ENCODE measurements at regions of chr3 and their contacts with region 1.

Region 1: GRCh38 chr3:141192345-141192744 is 39.3 kb upstream of the PXYLP1 start:
- DNase-seq: peak; percentile 58 to 90
- ATAC-seq: peak; percentile 99 to 100
- H3K4me3 ChIP-seq: no peak overlapping the region
- H3K27ac ChIP-seq: no peak overlapping the region
- H3K4me1 ChIP-seq: no peaks in the 10 kb centered on the region
- CTCF ChIP-seq: peak; percentile 82
- EP300 ChIP-seq: no peak
- POLR2A ChIP-seq: no peak
- RAD21 ChIP-seq: peak; percentile 87 to 88

Region 2: GRCh38 chr3:140898340-140899180 is 293.8 kb before region 1 on chr3:
- CTCF ChIA-PET with region 1: interaction called, 14 read pairs
- POLR2A ChIA-PET with region 1: no interaction called
- DNase-seq: peak in 1 of 2 experiments; percentile 54
- ATAC-seq: peak; percentile 81 to 85; a peak in 5 of 6 replicates
- H3K4me3 ChIP-seq: no peak overlapping the region
- H3K27ac ChIP-seq: no peak overlapping the region
- H3K4me1 ChIP-seq: no peaks in the 10 kb centered on the region
- CTCF ChIP-seq: peak; percentile 51
- EP300 ChIP-seq: no peak
- POLR2A ChIP-seq: no peak
- RAD21 ChIP-seq: peak; percentile 51 to 57

Region 3: DNA sequence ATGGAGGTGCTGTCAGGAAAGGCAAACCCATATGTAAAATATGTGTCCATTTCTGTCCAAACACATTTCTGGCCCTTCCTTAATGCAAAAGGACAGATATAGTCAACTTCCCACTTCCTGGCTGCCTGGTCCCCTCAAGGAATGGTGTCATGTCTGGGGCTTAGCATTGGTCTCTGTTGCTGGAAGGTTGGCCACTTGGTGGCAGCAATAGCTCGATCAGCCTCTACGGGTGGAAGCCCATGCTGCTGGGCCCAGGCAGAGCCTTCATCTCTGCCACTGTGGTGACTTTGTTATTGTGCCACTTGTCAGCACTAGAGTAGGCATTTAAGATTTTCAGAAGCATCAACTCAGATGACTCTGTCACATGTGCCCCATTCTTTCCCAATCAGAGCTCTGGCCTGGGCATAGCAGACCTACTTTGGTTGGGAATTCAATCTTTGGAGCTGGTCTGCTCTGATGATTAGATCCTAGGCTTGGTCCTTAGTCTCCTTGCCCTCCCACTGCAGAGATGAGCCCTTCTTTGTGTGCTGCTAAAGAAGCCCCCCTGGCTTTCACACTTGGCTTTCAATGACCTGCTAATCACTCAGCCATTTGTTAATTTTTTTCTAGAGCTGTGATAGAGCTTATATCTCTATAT is 192.2 kb before region 1 on chr3:
- CTCF ChIA-PET with region 1: interaction called, 27 read pairs
- POLR2A ChIA-PET with region 1: no interaction called
- DNase-seq: peak; percentile 17 to 47
- ATAC-seq: peak; percentile 94 to 99
- H3K4me3 ChIP-seq: no peak overlapping the region
- H3K27ac ChIP-seq: no peak overlapping the region
- H3K4me1 ChIP-seq: no peaks in the 10 kb centered on the region
- CTCF ChIP-seq: peak; percentile 57
- EP300 ChIP-seq: no peak
- POLR2A ChIP-seq: no peak
- RAD21 ChIP-seq: peak; percentile 60 to 75

Region 4: GRCh38 chr3:141011232-141011996 is 180.9 kb before region 1 on chr3:
- CTCF ChIA-PET with region 1: interaction called, 10 read pairs
- POLR2A ChIA-PET with region 1: no interaction called
- DNase-seq: peak; percentile 18 to 56
- ATAC-seq: peak; percentile 83 to 98
- H3K4me3 ChIP-seq: no peak overlapping the region
- H3K27ac ChIP-seq: no peak overlapping the region
- H3K4me1 ChIP-seq: no peaks in the 10 kb centered on the region
- CTCF ChIP-seq: peak; percentile 53
- EP300 ChIP-seq: no peak
- POLR2A ChIP-seq: no peak
- RAD21 ChIP-seq: peak; percentile 41 to 63; a peak in 4 of 5 replicates

Region 5: GRCh38 chr3:141129541-141130011 is 62.8 kb before region 1 on chr3:
- CTCF ChIA-PET with region 1: no interaction called
- POLR2A ChIA-PET with region 1: no interaction called
- DNase-seq: no peak
- ATAC-seq: no peak
- H3K4me3 ChIP-seq: no peak overlapping the region
- H3K27ac ChIP-seq: no peak overlapping the region
- H3K4me1 ChIP-seq: no peaks in the 10 kb centered on the region
- CTCF ChIP-seq: no peak
- EP300 ChIP-seq: no peak
- POLR2A ChIP-seq: no peak
- RAD21 ChIP-seq: no peak

Region 6: DNA sequence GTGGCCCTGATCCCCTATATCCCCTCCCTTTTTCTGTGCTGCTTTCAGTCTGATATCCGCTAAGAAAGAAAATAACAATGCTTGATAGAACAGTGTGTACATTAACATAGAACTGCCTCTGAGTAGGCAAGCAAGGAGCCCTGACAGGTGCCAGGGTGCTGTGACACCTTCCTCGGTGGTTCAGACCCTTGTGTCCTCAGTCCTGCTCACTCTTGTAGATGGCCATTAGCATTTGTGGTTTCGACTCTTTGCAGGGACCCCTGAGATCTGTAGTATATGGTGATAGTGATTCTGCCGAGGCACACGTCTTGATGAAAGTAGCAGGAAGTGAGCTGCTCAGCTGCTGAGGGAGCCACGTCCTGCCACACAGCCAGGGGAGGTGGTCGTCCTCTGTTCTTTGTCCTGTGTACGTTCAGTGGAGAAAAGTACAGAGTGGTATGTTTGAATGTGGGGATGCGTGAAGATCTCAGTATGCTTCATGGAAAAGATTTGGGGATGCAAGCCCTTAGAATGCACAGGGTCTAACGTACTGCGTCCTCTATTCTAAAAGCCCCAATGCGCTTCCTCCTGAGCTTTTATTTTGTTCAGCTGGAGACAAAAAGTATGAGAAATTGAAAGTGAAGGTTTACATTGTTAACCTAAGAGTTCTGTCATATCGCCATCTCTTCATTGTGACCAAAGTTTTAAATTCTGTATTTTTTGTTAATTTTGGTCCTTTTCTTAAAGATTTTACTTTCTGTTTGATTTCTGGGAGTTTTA is 74.6 kb after region 1 on chr3:
- CTCF ChIA-PET with region 1: no interaction called
- POLR2A ChIA-PET with region 1: no interaction called
- DNase-seq: no peak
- ATAC-seq: no peak
- H3K4me3 ChIP-seq: no peak overlapping the region
- H3K27ac ChIP-seq: no peak overlapping the region
- H3K4me1 ChIP-seq: no peaks in the 10 kb centered on the region
- CTCF ChIP-seq: no peak
- EP300 ChIP-seq: no peak
- POLR2A ChIP-seq: no peak
- RAD21 ChIP-seq: no peak

Region 7: GRCh38 chr3:141379250-141379966 is 187.1 kb after region 1 on chr3:
- CTCF ChIA-PET with region 1: no interaction called
- POLR2A ChIA-PET with region 1: no interaction called
- DNase-seq: no peak
- ATAC-seq: no peak
- H3K4me3 ChIP-seq: no peak overlapping the region
- H3K27ac ChIP-seq: peak overlapping the region in 1 of 2 experiments; percentile 40; a peak in 1 of 6 replicates
- H3K4me1 ChIP-seq: peaks cover 34% of the 10 kb centered on the region
- CTCF ChIP-seq: no peak
- EP300 ChIP-seq: no peak
- POLR2A ChIP-seq: no peak
- RAD21 ChIP-seq: no peak

Measured in A549 (cell line).